Calu3 (cell line): ENCODE measurements at regions of chr1 and their contacts with region 1.

Region 1: DNA sequence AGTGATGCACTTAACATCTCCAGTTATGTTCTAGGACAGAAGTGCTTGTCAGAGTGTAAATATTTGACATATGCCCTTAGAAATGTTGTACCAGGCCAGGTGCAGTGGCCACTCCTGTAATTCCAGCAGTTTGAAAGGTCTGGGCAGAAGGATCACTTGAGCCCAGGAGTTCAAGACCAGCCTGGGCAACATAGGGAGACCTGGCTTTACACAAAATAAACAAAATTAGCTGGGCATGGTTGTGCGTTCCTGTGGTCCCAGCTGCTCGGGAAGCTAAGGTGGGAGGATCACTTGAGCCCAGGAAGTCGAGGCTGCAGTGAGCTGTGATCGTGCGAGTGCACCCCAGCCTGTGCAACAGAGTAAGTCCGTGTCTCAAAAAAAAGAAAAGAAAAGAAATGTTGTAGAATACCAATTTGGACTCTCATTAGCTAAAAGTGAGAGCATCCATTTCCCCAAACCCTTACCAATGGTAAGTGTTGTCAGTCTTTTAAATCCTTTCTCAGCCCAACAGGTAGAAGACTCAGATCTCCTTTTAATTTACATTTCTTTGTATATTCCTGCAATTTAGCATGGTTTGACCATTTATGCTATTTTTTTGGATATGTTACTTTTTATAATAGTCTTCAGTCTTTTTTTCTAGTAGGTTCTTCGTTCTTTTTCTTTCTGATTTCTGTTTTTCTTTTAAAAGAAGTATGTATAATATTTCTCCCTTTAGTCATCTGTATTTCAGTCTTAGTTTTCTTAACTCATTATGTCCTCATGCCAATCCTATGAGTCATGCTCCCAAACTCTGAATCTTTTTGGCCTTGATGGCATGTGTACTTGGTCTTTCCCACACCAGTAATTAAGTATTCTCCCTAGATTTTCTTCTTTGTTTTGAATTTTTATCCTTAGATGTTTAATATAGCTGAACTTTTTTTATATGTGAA is 74.4 kb downstream of the CAMTA1 start:
- DNase-seq: peak; percentile 32
- H3K4me3 Mint-ChIP-seq: peak overlapping the region; percentile 0
- H3K27ac Mint-ChIP-seq: peak overlapping the region; percentile 28
- H3K4me1 Mint-ChIP-seq: peaks cover 54% of the 10 kb centered on the region
- H3K27me3 Mint-ChIP-seq: no peaks in the 10 kb centered on the region
- CTCF ChIP-seq: no peak

Region 2: DNA sequence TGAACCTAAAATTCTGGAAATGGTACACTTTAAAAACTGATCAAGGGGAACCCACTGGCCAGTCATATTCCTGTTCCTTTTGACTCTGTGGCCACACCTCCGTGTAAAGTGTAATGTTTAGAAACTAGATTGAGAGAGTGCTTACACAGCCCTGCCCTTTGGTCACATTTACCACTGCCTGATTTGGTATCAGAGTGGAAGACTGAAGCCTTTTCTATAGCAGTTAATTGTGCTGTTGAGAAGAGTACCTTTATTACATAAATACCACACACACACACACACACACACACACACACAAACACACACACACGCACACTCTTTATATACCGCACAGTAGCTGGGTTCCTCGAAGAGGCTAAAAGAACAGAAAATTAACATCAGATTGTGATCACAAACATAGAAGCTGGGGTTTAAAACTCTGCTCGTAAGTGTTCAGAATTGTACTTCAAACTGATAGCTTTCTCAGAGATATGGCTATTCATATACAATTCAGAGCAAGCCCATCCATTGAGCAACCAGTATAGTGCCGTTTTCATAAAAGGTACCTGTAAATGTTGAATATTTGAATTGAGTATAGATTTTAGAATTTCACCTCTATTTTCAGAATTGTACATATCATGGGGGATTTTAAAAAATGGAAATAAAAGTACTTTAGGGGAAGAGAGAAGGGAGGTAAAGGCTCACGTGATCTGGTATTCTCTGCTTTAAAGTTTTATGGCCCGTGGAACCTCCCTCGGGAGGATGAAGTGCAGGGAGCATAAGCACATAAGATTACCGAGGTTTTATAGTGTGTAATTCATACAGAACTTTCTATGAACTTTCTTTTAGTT is 36.9 kb before region 1 on chr1:
- CTCF ChIA-PET with region 1: no interaction called
- intact Hi-C with region 1: loop called (anchors 5 kb)
- DNase-seq: peak; percentile 16
- H3K4me3 Mint-ChIP-seq: peak overlapping the region; percentile 47
- H3K27ac Mint-ChIP-seq: peak overlapping the region; percentile 36
- H3K4me1 Mint-ChIP-seq: peaks cover 27% of the 10 kb centered on the region
- H3K27me3 Mint-ChIP-seq: no peaks in the 10 kb centered on the region
- CTCF ChIP-seq: no peak

Region 3: GRCh38 chr1:7026169-7026568 is 166.5 kb after region 1 on chr1:
- CTCF ChIA-PET with region 1: no interaction called
- intact Hi-C with region 1: no loop called
- DNase-seq: no peak
- H3K4me3 Mint-ChIP-seq: no peak overlapping the region
- H3K27ac Mint-ChIP-seq: no peak overlapping the region
- H3K4me1 Mint-ChIP-seq: no peaks in the 10 kb centered on the region
- H3K27me3 Mint-ChIP-seq: peaks cover 36% of the 10 kb centered on the region
- CTCF ChIP-seq: no peak